ENCODE measurements at regions of chr1 and their contacts with region 1.

Region 1: DNA sequence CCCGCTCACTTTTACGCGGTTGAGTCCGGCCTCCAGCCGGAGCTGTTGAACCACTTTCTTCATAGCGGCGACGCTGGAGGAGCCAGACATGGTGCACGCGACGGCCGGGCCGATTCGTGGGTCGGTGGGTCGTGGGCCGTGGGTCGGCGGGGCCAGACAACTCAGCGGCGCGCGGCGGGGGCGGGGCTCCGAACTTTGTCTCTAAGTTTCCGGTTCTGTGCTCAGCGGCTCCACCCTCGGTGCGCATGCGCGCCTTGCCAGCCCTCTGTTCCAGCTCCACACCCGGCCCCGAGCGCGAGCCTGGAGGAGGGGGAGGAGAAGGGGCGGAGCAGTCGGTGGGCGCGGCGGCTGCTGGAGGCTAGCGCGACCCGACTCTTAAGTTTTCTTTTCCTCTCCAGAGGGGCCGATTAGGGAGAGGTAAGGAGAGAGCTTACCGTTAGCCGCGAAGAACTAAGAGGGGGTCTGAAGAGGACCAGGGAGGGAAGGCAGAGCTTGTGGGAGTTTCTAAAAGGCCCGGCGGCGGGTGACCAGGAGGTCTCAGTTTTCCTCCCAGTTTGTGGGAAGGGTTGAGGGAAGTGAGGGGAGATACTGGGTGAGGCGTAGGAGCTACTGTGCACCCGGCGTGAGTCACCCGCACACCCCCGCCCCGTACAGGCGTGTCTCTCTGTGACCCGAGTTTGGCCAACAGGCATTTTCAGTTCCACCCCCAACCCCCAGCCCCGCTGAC is at the starts of genes GNG5 and SPATA1:
- DNase-seq: peak; percentile 91 to 98 (median 98)
- ATAC-seq: peak; percentile 89
- H3K4me3 ChIP-seq: peak within 1 kb of the TSS; percentile 87 to 95
- H3K4me3 Mint-ChIP-seq: peak within 1 kb of the TSS; percentile 94
- H3K27ac ChIP-seq: peak within 1 kb of the TSS; percentile 75 to 88
- H3K27ac Mint-ChIP-seq: peak within 1 kb of the TSS; percentile 96
- H3K4me1 ChIP-seq: peaks cover 40% of the 10 kb centered on the region
- H3K4me1 Mint-ChIP-seq: peaks cover 45% of the 10 kb centered on the region
- H3K27me3 ChIP-seq: no peaks in the 10 kb centered on the region
- H3K27me3 Mint-ChIP-seq: no peaks in the 10 kb centered on the region
- CTCF ChIP-seq: no peak
- total RNA-seq, gene GNG5: 19.5 TPM
- total RNA-seq, gene SPATA1: 0.52 to 0.94 TPM

Region 2: GRCh38 chr1:84298328-84298683 is 207.9 kb before region 1 on chr1:
- CTCF ChIA-PET with region 1: no interaction called
- POLR2A ChIA-PET with region 1: no interaction called
- intact Hi-C with region 1: loop called in 1 of 2 experiments (anchors 1 kb)
- DNase-seq: peak; percentile 12 to 75 (median 41)
- ATAC-seq: peak; percentile 70
- H3K4me3 ChIP-seq: peak overlapping the region; percentile 76 to 94
- H3K4me3 Mint-ChIP-seq: peak overlapping the region; percentile 78
- H3K27ac ChIP-seq: peak overlapping the region; percentile 8 to 53
- H3K27ac Mint-ChIP-seq: peak overlapping the region; percentile 46
- H3K4me1 ChIP-seq: peaks cover 17% of the 10 kb centered on the region
- H3K4me1 Mint-ChIP-seq: peaks cover 37% of the 10 kb centered on the region
- H3K27me3 ChIP-seq: no peaks in the 10 kb centered on the region
- H3K27me3 Mint-ChIP-seq: peaks cover 5% of the 10 kb centered on the region
- CTCF ChIP-seq: no peak

Region 3: GRCh38 chr1:84478876-84479868 is 27.0 kb before region 1 on chr1 and contains the start of gene RPF1:
- CTCF ChIA-PET with region 1: interaction called, 5 read pairs
- POLR2A ChIA-PET with region 1: interaction called, 18 read pairs
- intact Hi-C with region 1: loop called (anchors 1 to 2 kb)
- DNase-seq: peak; percentile 55 to 90 (median 82)
- ATAC-seq: peak; percentile 96
- H3K4me3 ChIP-seq: peak within 1 kb of the TSS; percentile 81 to 83
- H3K4me3 Mint-ChIP-seq: peak within 1 kb of the TSS; percentile 99
- H3K27ac ChIP-seq: peak within 1 kb of the TSS; percentile 88
- H3K27ac Mint-ChIP-seq: peak within 1 kb of the TSS; percentile 99
- H3K4me1 ChIP-seq: peaks cover 31% of the 10 kb centered on the region
- H3K4me1 Mint-ChIP-seq: peaks cover 42% of the 10 kb centered on the region
- H3K27me3 ChIP-seq: peaks cover 0 to 10% of the 10 kb centered on the region in 2 experiments
- H3K27me3 Mint-ChIP-seq: peaks cover 26% of the 10 kb centered on the region
- CTCF ChIP-seq: no peak
- total RNA-seq, gene RPF1: 84.2 to 85.3 TPM

Region 4: DNA sequence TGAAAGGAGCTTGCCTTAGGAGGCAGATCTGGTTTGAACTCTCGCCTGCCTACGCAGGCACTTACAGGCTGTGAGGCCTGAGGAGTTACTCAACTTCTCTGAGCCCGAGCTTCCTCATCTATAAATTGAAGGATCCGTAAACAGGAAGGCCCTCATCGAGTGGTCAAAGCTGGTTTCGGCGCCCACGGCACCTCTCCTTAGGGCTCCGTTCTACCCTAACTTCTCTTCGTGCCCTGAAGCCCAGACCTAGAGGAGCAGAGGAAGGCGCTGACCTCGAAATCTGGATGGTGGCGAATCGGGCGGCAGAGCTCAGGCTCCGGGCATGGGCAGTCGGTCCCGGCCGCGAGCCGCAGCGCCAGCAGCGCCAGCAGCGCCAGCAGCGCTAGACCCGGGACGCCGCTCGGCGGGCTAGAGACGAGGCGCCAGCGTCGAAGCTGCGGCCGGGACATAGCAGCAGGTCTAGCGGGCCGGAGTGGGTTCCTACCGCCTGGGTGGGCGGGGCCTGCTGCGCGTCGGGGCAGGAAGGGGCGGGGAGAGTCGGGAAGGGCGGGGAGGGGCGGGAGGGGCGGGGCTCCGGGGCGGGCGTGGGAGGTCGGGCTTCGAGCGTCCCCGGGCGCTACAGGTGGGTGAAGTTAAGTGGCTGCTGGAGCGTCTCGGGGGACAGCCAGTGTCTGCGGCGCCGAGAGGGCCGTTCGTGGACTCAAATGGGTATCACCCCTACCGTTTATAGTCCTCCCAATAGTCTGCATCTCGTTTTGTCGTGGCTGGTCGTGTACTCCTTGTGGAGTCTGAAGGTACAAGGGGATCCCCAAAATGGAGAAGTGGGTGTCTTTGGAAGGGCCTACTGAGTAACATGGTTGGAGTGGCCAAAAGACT is 68.0 kb after region 1 on chr1 and contains the start of gene CTBS:
- CTCF ChIA-PET with region 1: interaction called, 3 read pairs
- POLR2A ChIA-PET with region 1: interaction called, 27 read pairs
- intact Hi-C with region 1: loop called (anchors 1 kb)
- DNase-seq: peak; percentile 67 to 93 (median 85)
- ATAC-seq: peak; percentile 91
- H3K4me3 ChIP-seq: peak within 1 kb of the TSS; percentile 81 to 92
- H3K4me3 Mint-ChIP-seq: peak within 1 kb of the TSS; percentile 96
- H3K27ac ChIP-seq: peak within 1 kb of the TSS; percentile 94 to 96
- H3K27ac Mint-ChIP-seq: peak within 1 kb of the TSS; percentile 99
- H3K4me1 ChIP-seq: peaks cover 20% of the 10 kb centered on the region
- H3K4me1 Mint-ChIP-seq: peaks cover 42% of the 10 kb centered on the region
- H3K27me3 ChIP-seq: no peaks in the 10 kb centered on the region
- H3K27me3 Mint-ChIP-seq: no peaks in the 10 kb centered on the region
- CTCF ChIP-seq: no peak
- total RNA-seq, gene CTBS: 17.3 to 19.7 TPM

Region 5: GRCh38 chr1:85061711-85062424 is 555.7 kb after region 1 on chr1:
- CTCF ChIA-PET with region 1: no interaction called
- POLR2A ChIA-PET with region 1: no interaction called
- intact Hi-C with region 1: loop called in 1 of 2 experiments (anchors 10 kb)
- DNase-seq: peak; percentile 64 to 96 (median 81)
- ATAC-seq: peak; percentile 99
- H3K4me3 ChIP-seq: peak overlapping the region; percentile 38 to 49
- H3K4me3 Mint-ChIP-seq: peak overlapping the region; percentile 84
- H3K27ac ChIP-seq: peak overlapping the region in 1 of 2 experiments; percentile 29
- H3K27ac Mint-ChIP-seq: peak overlapping the region; percentile 72
- H3K4me1 ChIP-seq: peaks cover 4% of the 10 kb centered on the region
- H3K4me1 Mint-ChIP-seq: peaks cover 14% of the 10 kb centered on the region
- H3K27me3 ChIP-seq: no peaks in the 10 kb centered on the region
- H3K27me3 Mint-ChIP-seq: peaks cover 12% of the 10 kb centered on the region
- CTCF ChIP-seq: no peak

Measured in CD8-positive, alpha-beta T cell (primary cell).